K562 (cell line): ENCODE measurements at regions of chr9 and their contacts with region 1.

Region 1: DNA sequence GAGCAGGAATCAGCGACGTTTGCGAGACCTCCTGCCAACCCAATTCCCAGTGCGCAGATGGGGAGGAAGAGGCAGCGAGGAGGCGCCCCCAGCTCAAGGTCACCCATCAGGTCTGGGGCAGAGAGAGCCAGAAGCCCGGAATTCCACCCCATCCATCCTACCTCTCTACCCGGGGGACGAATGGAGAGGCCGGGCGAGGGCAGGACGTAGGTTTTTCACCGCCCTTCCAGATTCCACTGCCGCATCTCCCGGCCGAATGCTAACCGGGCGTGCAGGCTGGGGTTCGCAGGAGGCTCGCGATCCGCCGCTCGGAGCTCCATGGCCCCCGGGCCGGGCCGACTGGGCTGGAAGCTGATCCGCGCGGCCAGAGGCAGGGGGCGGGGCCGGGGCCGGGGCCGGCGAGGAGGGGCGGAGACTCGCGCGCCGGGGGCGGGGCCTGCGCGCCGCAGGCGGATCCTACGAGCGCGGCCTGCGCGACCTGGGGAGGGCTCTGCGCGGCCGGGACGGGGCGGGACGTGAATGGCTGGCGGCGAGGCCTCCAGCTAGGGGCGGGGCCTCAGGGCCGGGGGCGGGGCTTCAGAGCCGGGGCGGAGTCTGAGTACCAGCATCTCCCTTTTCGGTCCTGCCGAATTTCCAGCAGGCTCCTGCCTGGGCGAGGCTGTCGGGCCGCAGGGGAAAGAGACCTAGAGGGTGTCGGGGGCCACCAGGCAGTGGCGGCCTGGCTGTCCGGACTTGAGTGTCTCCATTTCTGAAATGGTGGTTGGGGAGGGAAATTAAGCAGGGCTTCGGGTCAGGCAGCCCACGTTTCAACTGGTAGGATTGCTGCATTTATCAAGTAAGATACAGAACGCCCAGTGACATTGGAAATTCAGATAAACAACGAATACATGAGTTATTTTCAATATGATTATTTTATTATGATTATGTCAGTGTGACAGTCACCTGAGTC is at the start of gene ST6GALNAC4:
- DNase-seq: peak; percentile 94 to 98 (median 97)
- ATAC-seq: peak; percentile 94
- H3K4me3 ChIP-seq: peak within 1 kb of the TSS; percentile 70
- H3K27ac ChIP-seq: peak within 1 kb of the TSS; percentile 40
- H3K4me1 ChIP-seq: peaks cover 38 to 62% of the 10 kb centered on the region in 2 experiments
- H3K27me3 ChIP-seq: no peaks in the 10 kb centered on the region
- CTCF ChIP-seq: no peak
- EP300 ChIP-seq: no peak
- POLR2A ChIP-seq: peak; percentile 67
- RAD21 ChIP-seq: no peak
- polyA plus RNA-seq, gene ST6GALNAC4: 2.6 to 3.4 TPM

Region 2: GRCh38 chr9:126947529-126947928 is 969.4 kb before region 1 on chr9:
- CTCF ChIA-PET with region 1: no interaction called
- POLR2A ChIA-PET with region 1: no interaction called
- in situ Hi-C with region 1: loop called (anchors 25 kb)
- intact Hi-C with region 1: no loop called
- DNase-seq: peak in 1 of 4 experiments; percentile 13
- ATAC-seq: peak; percentile 47; the same call in 2 of the 3 replicates
- H3K4me3 ChIP-seq: no peak overlapping the region
- H3K27ac ChIP-seq: no peak overlapping the region
- H3K4me1 ChIP-seq: peaks cover 9% of the 10 kb centered on the region in 2 experiments; a peak in 4 of 5 replicates
- H3K27me3 ChIP-seq: no peaks in the 10 kb centered on the region; a peak in 1 of 5 replicates
- CTCF ChIP-seq: peak in 2 of 3 experiments; percentile 40 to 49; a peak in 5 of 6 replicates
- EP300 ChIP-seq: no peak
- POLR2A ChIP-seq: no peak
- RAD21 ChIP-seq: peak in 1 of 2 experiments; percentile 63; a peak in 2 of 4 replicates

Region 3: DNA sequence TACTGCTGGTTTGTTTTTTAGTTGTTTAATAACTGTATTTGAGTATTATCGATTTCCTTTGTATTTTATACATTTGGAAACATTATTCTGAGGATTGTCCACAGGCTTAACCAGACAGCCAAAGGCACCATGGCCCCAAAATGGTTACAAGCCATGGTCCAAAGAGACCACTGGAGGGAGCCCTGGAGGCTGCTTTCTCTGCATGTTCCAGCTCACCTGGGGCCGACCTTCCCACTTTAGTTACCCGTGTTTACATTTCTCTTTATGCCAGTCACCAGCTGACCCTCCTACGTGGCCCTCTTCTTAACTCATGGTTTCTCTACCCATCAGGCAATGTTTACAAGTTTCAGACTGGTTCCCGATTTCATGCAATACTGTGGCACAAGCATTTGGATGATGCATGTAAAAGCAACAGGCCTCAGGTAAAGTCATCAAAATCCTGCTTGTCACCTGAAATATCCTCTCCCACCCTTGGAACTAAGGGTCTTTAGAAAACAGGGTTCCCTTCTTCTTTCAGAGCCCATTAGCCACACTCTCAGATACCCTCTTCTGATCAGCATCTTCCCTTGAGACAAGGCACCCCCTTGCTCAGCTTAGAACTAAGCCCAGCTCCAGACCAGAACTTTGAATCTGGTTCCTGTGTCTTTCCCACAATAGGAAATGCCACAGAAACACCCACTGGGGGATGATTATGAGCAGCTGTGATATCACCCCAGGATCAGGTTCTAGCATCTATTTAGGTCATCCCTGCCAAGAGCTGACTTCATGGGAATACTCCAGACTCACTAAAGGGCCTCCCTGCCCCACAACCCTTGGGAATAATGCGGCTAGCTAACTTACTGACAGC is 702.3 kb before region 1 on chr9:
- CTCF ChIA-PET with region 1: no interaction called
- POLR2A ChIA-PET with region 1: no interaction called
- in situ Hi-C with region 1: loop called (anchors 10 kb)
- intact Hi-C with region 1: no loop called
- DNase-seq: peak; percentile 71 to 77 (median 74)
- ATAC-seq: peak; percentile 89
- H3K4me3 ChIP-seq: no peak overlapping the region
- H3K27ac ChIP-seq: no peak overlapping the region
- H3K4me1 ChIP-seq: peaks cover 7 to 14% of the 10 kb centered on the region in 2 experiments; a peak in 4 of 5 replicates
- H3K27me3 ChIP-seq: peaks cover 27 to 81% of the 10 kb centered on the region in 2 experiments
- CTCF ChIP-seq: peak; percentile 81 to 87 (median 84)
- EP300 ChIP-seq: no peak
- POLR2A ChIP-seq: no peak
- RAD21 ChIP-seq: peak; percentile 69 to 78

Region 4: GRCh38 chr9:127503947-127504782 is 412.8 kb before region 1 on chr9:
- CTCF ChIA-PET with region 1: interaction called, 3 read pairs
- POLR2A ChIA-PET with region 1: no interaction called
- in situ Hi-C with region 1: no loop called
- intact Hi-C with region 1: loop called (anchors 10 kb)
- DNase-seq: peak; percentile 68 to 87 (median 76)
- ATAC-seq: peak; percentile 94
- H3K4me3 ChIP-seq: no peak overlapping the region
- H3K27ac ChIP-seq: no peak overlapping the region
- H3K4me1 ChIP-seq: peaks cover 14 to 62% of the 10 kb centered on the region in 2 experiments
- H3K27me3 ChIP-seq: no peaks in the 10 kb centered on the region
- CTCF ChIP-seq: peak; percentile 92 to 94 (median 93)
- EP300 ChIP-seq: no peak
- POLR2A ChIP-seq: no peak
- RAD21 ChIP-seq: peak; percentile 90 to 95

Region 5: GRCh38 chr9:127869310-127870152 is 47.4 kb before region 1 on chr9:
- CTCF ChIA-PET with region 1: no interaction called
- POLR2A ChIA-PET with region 1: no interaction called
- in situ Hi-C with region 1: no loop called
- intact Hi-C with region 1: loop called (anchors 5 kb)
- DNase-seq: peak; percentile 91 to 93 (median 92)
- ATAC-seq: peak; percentile 97
- H3K4me3 ChIP-seq: no peak overlapping the region
- H3K27ac ChIP-seq: no peak overlapping the region
- H3K4me1 ChIP-seq: peaks cover 17 to 69% of the 10 kb centered on the region in 2 experiments
- H3K27me3 ChIP-seq: no peaks in the 10 kb centered on the region
- CTCF ChIP-seq: peak; percentile 93 to 99 (median 97)
- EP300 ChIP-seq: 0 out of 2 replicates have a peak, but pooled peaks have one; percentile 16
- POLR2A ChIP-seq: no peak
- RAD21 ChIP-seq: peak; percentile 97 to 98

Region 6: DNA sequence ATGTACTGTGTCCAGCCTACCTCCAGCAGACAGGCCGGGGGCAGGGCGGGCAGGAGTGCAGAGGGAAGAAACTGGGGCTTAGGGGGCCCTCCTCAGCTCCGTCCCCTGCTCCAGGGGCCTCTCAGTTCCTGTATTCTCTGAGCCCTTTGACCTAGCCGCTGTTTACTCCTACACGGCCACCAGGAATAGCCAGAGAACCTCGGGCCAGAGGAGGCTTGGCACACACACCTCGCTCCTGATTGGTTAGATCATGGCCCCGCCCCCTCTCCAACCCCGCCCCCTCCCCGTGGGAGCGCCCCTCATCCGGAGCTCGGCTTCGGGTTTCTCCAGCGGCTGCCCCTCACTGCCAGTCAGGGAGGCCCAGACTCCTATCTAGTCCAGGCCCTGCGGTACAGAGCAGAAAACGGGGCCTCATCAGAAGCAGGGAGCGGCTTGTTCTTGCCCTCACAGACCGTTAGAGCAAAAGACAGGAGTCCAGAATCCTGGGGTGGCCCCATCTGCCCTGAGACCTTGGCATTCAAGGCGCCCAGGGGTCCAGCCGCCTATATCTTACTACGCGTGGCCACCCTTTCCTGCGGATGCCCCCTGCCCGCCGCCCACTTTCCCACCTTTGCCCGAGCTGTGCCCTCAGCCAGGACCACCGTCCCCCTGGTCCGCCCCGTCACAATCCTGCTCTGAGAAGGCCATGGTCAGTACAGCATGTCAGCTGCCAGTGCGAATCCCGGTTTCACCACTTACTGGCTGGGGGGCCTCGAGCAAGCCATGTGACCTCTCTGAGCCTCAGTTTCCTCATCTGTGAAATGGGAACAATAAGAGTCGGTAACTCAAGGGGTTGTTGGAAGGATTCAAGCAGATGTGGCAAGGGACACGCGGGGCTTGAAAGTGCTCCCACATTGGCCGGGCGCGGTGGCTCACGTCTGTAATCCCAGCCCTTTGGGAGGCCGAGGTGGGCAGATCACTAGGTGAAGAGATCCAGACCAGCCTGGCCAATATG is 19.4 kb before region 1 on chr9:
- CTCF ChIA-PET with region 1: no interaction called
- POLR2A ChIA-PET with region 1: interaction called, 5 read pairs
- in situ Hi-C with region 1: no loop called
- intact Hi-C with region 1: loop called (anchors 2 kb)
- DNase-seq: peak; percentile 85 to 95 (median 94)
- ATAC-seq: peak; percentile 83
- H3K4me3 ChIP-seq: peak overlapping the region; percentile 14; the same call in 1 of the 2 replicates
- H3K27ac ChIP-seq: peak overlapping the region; percentile 58
- H3K4me1 ChIP-seq: peaks cover 11 to 44% of the 10 kb centered on the region in 2 experiments
- H3K27me3 ChIP-seq: no peaks in the 10 kb centered on the region
- CTCF ChIP-seq: no peak
- EP300 ChIP-seq: no peak; the same call in 1 of the 2 replicates
- POLR2A ChIP-seq: no peak
- RAD21 ChIP-seq: no peak